ENCODE measurements at regions of chrX and their contacts with region 1.

Region 1: GRCh38 chrX:1481636-1482529 is 29.2 kb upstream of the ASMTL start:
- DNase-seq: peak; percentile 49 to 92 (median 70)
- ATAC-seq: peak; percentile 84
- H3K4me3 ChIP-seq: peak overlapping the region; percentile 27
- H3K4me3 Mint-ChIP-seq: peak overlapping the region; percentile 73
- H3K27ac ChIP-seq: peak overlapping the region; percentile 59 to 76
- H3K27ac Mint-ChIP-seq: peak overlapping the region; percentile 95
- H3K4me1 ChIP-seq: peaks cover 58% of the 10 kb centered on the region
- H3K4me1 Mint-ChIP-seq: peaks cover 64% of the 10 kb centered on the region
- H3K27me3 ChIP-seq: no peaks in the 10 kb centered on the region
- H3K27me3 Mint-ChIP-seq: no peaks in the 10 kb centered on the region
- CTCF ChIP-seq: no peak

Region 2: GRCh38 chrX:1394708-1395501 is 87.0 kb before region 1 on chrX:
- CTCF ChIA-PET with region 1: no interaction called
- POLR2A ChIA-PET with region 1: no interaction called
- intact Hi-C with region 1: no loop called
- DNase-seq: peak in 2 of 14 experiments; percentile 18 to 32
- ATAC-seq: no peak
- H3K4me3 ChIP-seq: no peak overlapping the region
- H3K4me3 Mint-ChIP-seq: peak overlapping the region; percentile 92
- H3K27ac ChIP-seq: no peak overlapping the region
- H3K27ac Mint-ChIP-seq: peak overlapping the region; percentile 7
- H3K4me1 ChIP-seq: peaks cover 32% of the 10 kb centered on the region
- H3K4me1 Mint-ChIP-seq: peaks cover 28% of the 10 kb centered on the region
- H3K27me3 ChIP-seq: no peaks in the 10 kb centered on the region
- H3K27me3 Mint-ChIP-seq: no peaks in the 10 kb centered on the region
- CTCF ChIP-seq: no peak

Region 3: DNA sequence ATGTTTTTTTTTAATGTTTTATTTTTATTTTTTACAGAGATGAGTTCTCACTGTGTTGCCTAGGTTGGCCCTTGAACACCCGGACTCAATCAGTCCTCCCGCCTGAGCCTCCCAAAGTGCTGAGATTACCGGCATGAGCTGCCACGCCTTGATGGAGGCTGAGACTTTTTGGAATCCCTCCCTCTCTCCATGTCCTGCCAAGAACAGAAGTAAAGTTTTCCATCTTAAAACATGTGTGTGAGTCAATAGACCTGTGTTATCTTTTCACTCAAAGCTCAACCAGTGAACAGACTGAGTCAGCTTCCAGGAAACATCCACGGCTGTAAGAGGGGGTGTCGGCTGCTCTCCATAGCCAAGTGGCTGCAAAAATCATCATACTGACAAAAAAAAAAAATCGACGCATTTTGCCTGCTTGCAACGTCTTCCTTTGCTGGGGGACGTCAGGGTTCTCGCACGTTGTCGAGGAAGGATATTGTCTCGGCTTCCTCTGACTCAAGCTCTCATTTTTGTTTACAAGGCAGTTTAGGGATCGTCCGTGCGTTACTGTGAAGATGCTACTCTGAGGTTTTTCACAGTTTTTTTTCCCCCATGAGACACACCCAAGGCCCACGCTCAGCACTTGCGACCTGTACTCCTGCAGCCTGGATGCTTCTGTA is 19.2 kb before region 1 on chrX:
- CTCF ChIA-PET with region 1: no interaction called
- POLR2A ChIA-PET with region 1: no interaction called
- intact Hi-C with region 1: loop called (anchors 2 kb)
- DNase-seq: peak; percentile 50 to 95 (median 66)
- ATAC-seq: peak; percentile 79
- H3K4me3 ChIP-seq: no peak overlapping the region
- H3K4me3 Mint-ChIP-seq: peak overlapping the region; percentile 9
- H3K27ac ChIP-seq: peak overlapping the region; percentile 68 to 74
- H3K27ac Mint-ChIP-seq: peak overlapping the region; percentile 94
- H3K4me1 ChIP-seq: peaks cover 55% of the 10 kb centered on the region
- H3K4me1 Mint-ChIP-seq: peaks cover 49% of the 10 kb centered on the region
- H3K27me3 ChIP-seq: no peaks in the 10 kb centered on the region
- H3K27me3 Mint-ChIP-seq: no peaks in the 10 kb centered on the region
- CTCF ChIP-seq: no peak

Region 4: GRCh38 chrX:1468250-1468772 is 13.6 kb before region 1 on chrX:
- CTCF ChIA-PET with region 1: no interaction called
- POLR2A ChIA-PET with region 1: no interaction called
- intact Hi-C with region 1: loop called (anchors 1 kb)
- DNase-seq: peak; percentile 53 to 92 (median 71)
- ATAC-seq: peak; percentile 43
- H3K4me3 ChIP-seq: no peak overlapping the region
- H3K4me3 Mint-ChIP-seq: peak overlapping the region; percentile 57
- H3K27ac ChIP-seq: peak overlapping the region; percentile 77 to 79
- H3K27ac Mint-ChIP-seq: peak overlapping the region; percentile 94
- H3K4me1 ChIP-seq: peaks cover 97% of the 10 kb centered on the region
- H3K4me1 Mint-ChIP-seq: peaks cover 75% of the 10 kb centered on the region
- H3K27me3 ChIP-seq: no peaks in the 10 kb centered on the region
- H3K27me3 Mint-ChIP-seq: no peaks in the 10 kb centered on the region
- CTCF ChIP-seq: no peak

Region 5: DNA sequence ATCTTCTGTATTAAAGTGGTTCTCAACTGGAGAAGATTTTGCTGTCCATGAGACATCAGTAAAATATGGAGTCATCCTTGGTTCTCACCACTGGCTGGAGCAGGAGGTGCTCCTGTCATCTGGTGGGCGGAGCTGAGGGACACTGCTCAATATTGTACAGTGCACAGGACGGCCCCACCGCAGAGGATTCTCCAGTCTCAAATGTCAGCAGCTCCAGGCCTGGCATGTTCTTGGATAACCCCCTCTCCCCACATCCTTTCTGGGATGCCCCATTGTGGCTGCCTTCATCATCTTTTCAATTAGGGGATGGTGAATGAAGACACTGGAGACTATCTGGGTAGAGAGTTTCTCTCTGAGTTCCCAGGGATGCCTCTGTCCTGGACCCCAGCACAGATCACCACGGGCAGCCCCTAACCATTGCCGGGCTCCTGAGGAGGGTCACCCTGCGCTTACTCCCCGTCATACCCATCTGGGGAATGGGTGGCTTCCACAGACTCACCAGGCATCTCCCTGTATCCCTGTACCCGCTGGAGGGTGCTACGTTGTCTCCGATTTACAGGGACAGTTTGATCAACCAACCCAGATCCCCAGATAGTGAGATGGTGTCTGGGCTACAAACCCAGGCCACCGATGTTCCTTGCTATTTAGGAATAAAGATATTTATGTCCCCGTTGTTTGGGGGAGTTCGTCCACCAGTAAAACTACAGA is 77.0 kb after region 1 on chrX:
- CTCF ChIA-PET with region 1: no interaction called
- POLR2A ChIA-PET with region 1: no interaction called
- intact Hi-C with region 1: no loop called
- DNase-seq: no peak
- ATAC-seq: no peak
- H3K4me3 ChIP-seq: no peak overlapping the region
- H3K4me3 Mint-ChIP-seq: no peak overlapping the region
- H3K27ac ChIP-seq: no peak overlapping the region
- H3K27ac Mint-ChIP-seq: peak overlapping the region; percentile 76
- H3K4me1 ChIP-seq: peaks cover 69% of the 10 kb centered on the region
- H3K4me1 Mint-ChIP-seq: peaks cover 68% of the 10 kb centered on the region
- H3K27me3 ChIP-seq: no peaks in the 10 kb centered on the region
- H3K27me3 Mint-ChIP-seq: no peaks in the 10 kb centered on the region
- CTCF ChIP-seq: no peak